Activated T-helper 2 cell treated with anti-CD3 and anti-CD28 coated beads, Interferon-gamma antibody, Interleukin-2, Interleukin-4, amounts not matched to agents 10 μg/mL and 5 μg/mL and 100 μg/mL, durations not matched to agents 14 hours and 24 hours and 36 hours (primary cell): ENCODE measurements at regions of chr3 and their contacts with region 1.

Region 1: GRCh38 chr3:189530822-189531221 is 100.4 kb upstream of the TP63 start:
- DNase-seq: no peak
- H3K4me3 Mint-ChIP-seq: peak overlapping the region; percentile 41
- H3K27ac Mint-ChIP-seq: peak overlapping the region; percentile 87
- H3K4me1 Mint-ChIP-seq: peaks cover 33% of the 10 kb centered on the region
- H3K27me3 Mint-ChIP-seq: no peaks in the 10 kb centered on the region

Region 2: DNA sequence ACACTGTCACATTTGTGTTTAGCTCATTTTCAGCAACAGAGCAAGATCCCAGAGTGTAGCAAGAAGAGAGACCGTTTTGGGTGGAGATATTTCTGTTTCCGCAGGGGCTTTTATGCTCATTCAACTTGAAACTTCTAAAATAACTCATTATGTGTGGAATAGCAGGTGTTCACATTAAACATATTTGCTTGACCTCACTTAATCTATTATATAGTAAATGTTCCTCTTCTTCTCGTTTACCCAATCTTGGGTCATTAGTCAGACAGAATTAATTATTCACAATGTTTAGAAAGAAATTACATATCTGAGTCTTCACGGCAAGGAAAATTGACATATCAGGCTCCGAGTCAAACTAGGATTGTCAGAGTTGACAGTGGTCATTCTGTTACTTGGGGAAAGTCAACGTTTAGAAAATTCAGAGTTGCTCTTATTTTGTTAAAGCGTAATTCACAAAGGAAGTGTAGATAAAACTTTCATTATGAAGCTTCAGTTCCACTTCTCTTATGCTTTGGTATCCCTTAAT is 136.2 kb before region 1 on chr3:
- intact Hi-C with region 1: loop called (anchors 1 kb)
- DNase-seq: no peak
- H3K4me3 Mint-ChIP-seq: peak overlapping the region; percentile 6
- H3K27ac Mint-ChIP-seq: peak overlapping the region; percentile 84
- H3K4me1 Mint-ChIP-seq: peaks cover 40% of the 10 kb centered on the region
- H3K27me3 Mint-ChIP-seq: no peaks in the 10 kb centered on the region

Region 3: DNA sequence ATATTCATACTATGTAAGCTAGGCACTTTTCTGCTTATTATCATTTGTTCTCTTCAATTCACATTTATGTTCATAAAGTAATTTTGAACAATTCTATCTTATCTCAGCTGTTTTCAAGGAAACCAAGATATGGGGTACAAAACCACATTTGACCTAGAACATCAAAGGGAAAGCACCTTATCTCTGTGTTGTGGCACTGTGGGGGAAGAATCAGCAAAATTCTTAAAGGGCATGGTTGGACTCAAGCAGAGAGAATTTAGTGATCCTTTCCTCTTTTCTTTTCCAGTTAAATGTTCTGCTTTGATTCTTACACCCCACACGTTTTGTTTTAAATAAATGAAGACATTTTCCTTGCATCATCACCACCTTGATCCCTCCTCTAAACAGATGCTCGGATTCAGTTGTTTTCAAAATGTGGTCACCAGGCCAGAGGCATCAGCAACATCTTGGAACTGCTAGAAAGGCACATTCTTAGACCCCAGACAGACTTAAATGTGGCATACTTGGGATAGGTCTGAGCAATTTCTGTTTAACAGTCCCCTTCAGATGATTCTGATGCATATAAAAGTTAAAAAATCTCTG is 28.1 kb before region 1 on chr3:
- intact Hi-C with region 1: loop called (anchors 1 kb)
- DNase-seq: no peak
- H3K4me3 Mint-ChIP-seq: no peak overlapping the region
- H3K27ac Mint-ChIP-seq: peak overlapping the region; percentile 30
- H3K4me1 Mint-ChIP-seq: peaks cover 41% of the 10 kb centered on the region
- H3K27me3 Mint-ChIP-seq: no peaks in the 10 kb centered on the region

Region 4: GRCh38 chr3:189586941-189587663 is 56.3 kb after region 1 on chr3:
- intact Hi-C with region 1: loop called (anchors 2 kb)
- DNase-seq: no peak
- H3K4me3 Mint-ChIP-seq: no peak overlapping the region
- H3K27ac Mint-ChIP-seq: peak overlapping the region; percentile 64
- H3K4me1 Mint-ChIP-seq: peaks cover 28% of the 10 kb centered on the region
- H3K27me3 Mint-ChIP-seq: peaks cover 2% of the 10 kb centered on the region

Region 5: DNA sequence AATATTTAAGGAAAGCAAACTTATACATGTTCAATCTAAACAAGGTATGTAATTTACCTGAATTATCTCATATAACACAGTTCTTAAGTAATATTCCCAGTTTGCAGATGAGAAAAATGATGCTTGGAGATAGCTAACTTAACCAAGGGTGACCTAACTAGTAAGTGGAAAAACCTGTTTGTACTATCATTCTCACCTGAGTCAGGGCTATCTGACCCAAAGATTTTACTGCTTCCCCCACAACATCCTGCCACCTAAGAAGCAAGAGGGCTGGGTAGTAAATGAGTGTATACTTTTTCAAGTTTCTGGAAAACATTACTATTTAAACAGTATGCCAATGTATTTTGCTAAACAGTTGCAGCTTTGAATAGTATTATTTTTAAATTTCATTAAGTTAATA is 111.0 kb after region 1 on chr3:
- intact Hi-C with region 1: no loop called
- DNase-seq: no peak
- H3K4me3 Mint-ChIP-seq: no peak overlapping the region
- H3K27ac Mint-ChIP-seq: no peak overlapping the region
- H3K4me1 Mint-ChIP-seq: peaks cover 4% of the 10 kb centered on the region
- H3K27me3 Mint-ChIP-seq: peaks cover 4% of the 10 kb centered on the region

Region 6: GRCh38 chr3:189947948-189948723 is 417.3 kb after region 1 on chr3:
- intact Hi-C with region 1: loop called (anchors 10 kb)
- DNase-seq: no peak
- H3K4me3 Mint-ChIP-seq: no peak overlapping the region
- H3K27ac Mint-ChIP-seq: no peak overlapping the region
- H3K4me1 Mint-ChIP-seq: peaks cover 18% of the 10 kb centered on the region
- H3K27me3 Mint-ChIP-seq: peaks cover 10% of the 10 kb centered on the region